Activated CD4-positive, alpha-beta T cell treated with anti-CD3 and anti-CD28 coated beads for 36 hours (primary cell): ENCODE measurements at regions of chr6 and their contacts with region 1.

Region 1: GRCh38 chr6:26445934-26446667 is 5.8 kb downstream of the BTN3A3 start:
- DNase-seq: peak; percentile 60
- ATAC-seq: peak; percentile 94
- H3K4me3 Mint-ChIP-seq: peak overlapping the region; percentile 7
- H3K27ac Mint-ChIP-seq: peak overlapping the region; percentile 78
- H3K4me1 Mint-ChIP-seq: peaks cover 54% of the 10 kb centered on the region
- H3K27me3 Mint-ChIP-seq: no peaks in the 10 kb centered on the region

Region 2: DNA sequence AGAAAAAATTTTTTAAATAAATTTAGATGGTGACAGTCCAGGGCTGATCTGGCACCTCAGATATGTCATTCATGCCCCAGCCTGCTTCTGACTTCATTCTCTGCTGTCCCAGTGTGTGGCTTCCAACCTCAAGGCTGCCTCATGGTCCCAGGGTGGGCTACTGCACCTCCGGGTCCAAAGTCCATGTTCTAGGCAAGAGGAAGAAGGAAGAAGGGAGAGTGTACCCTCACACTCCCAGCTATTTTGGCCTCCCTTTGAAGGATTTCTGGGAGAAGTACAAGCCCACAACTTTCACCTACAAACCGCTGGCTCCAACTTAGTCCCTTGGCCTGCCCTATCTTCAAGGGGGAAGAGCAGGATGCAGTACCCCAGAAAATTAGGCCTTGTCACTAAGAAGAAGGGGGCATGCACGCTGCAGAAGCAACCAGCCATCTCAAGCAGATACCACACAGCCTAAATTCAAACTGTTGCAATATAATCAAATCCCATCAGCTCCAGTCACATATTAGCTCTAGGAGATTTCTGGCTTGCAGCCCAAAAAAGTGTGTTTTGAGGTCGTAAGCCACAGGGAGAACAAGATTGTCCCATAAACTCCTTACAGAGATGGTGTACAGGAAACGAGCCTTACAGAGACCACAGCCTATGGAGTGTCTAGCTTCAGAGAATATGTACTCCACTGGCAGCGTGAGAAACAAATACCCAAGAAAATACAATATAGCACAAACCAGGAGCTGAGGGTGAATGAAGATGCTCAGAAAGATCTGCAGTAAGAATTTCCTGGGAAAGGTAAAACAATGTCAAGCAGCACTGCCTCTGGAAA is 82.0 kb before region 1 on chr6:
- CTCF ChIA-PET with region 1: no interaction called
- POLR2A ChIA-PET with region 1: no interaction called
- intact Hi-C with region 1: no loop called
- DNase-seq: no peak
- ATAC-seq: no peak
- H3K4me3 Mint-ChIP-seq: no peak overlapping the region
- H3K27ac Mint-ChIP-seq: no peak overlapping the region
- H3K4me1 Mint-ChIP-seq: peaks cover 56% of the 10 kb centered on the region
- H3K27me3 Mint-ChIP-seq: no peaks in the 10 kb centered on the region

Region 3: GRCh38 chr6:26457806-26458688 is 11.9 kb after region 1 on chr6 and contains the start of gene BTN2A1:
- CTCF ChIA-PET with region 1: interaction called, 13 read pairs
- POLR2A ChIA-PET with region 1: interaction called, 4 read pairs
- intact Hi-C with region 1: loop called in 1 of 2 experiments (anchors 2 kb)
- DNase-seq: peak; percentile 76
- ATAC-seq: peak; percentile 99
- H3K4me3 Mint-ChIP-seq: peak within 1 kb of the TSS; percentile 87
- H3K27ac Mint-ChIP-seq: peak within 1 kb of the TSS; percentile 97
- H3K4me1 Mint-ChIP-seq: peaks cover 45% of the 10 kb centered on the region
- H3K27me3 Mint-ChIP-seq: no peaks in the 10 kb centered on the region
- total RNA-seq, gene BTN2A1: 17.3 to 17.5 TPM